ENCODE measurements at regions of chr11 and their contacts with region 1.

Region 1: DNA sequence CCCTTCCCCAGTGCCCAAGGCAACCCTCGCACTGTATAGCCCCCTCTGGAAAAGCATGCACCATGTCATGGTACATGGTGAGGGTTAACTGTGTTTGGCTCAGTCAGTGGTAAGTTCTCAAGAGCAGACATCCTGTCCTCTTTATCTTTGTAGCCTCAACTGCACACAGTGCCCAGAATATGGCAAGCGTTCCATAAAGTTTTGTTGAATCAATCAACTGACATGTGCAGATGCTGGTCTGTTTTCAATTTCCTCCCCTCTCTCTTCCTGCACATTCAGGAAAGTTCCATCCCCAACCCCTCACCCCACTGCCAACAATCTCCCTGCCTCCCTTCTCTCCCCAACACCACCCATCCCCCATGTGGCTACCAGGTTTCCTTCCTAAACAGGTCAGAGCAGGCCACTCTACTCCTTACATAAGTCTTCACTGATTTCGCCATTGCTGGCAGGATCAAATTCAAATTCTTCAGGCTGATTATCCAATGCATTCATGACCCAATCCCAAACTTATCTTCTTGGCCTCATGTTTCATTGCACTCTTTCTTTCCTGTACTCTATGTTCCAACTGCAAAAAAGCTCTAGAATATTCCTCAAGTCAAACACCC is 15.5 kb upstream of the TMPRSS5 start:
- DNase-seq: no peak
- H3K4me3 ChIP-seq: no peak overlapping the region
- H3K27ac ChIP-seq: no peak overlapping the region
- H3K4me1 ChIP-seq: no peaks in the 10 kb centered on the region
- H3K27me3 ChIP-seq: no peaks in the 10 kb centered on the region
- CTCF ChIP-seq: no peak
- EP300 ChIP-seq: no peak
- POLR2A ChIP-seq: no peak
- RAD21 ChIP-seq: no peak

Region 2: GRCh38 chr11:113305440-113306336 is 415.9 kb before region 1 on chr11:
- CTCF ChIA-PET with region 1: interaction called, 11 read pairs
- POLR2A ChIA-PET with region 1: no interaction called
- DNase-seq: peak; percentile 41 to 85
- H3K4me3 ChIP-seq: no peak overlapping the region
- H3K27ac ChIP-seq: no peak overlapping the region
- H3K4me1 ChIP-seq: no peaks in the 10 kb centered on the region
- H3K27me3 ChIP-seq: no peaks in the 10 kb centered on the region
- CTCF ChIP-seq: peak; percentile 95 to 98 (median 97)
- EP300 ChIP-seq: no peak
- POLR2A ChIP-seq: no peak
- RAD21 ChIP-seq: peak; percentile 99 to 100

Measured in H1 (cell line).